ENCODE measurements at regions of chr7 and their contacts with region 1.

Region 1: DNA sequence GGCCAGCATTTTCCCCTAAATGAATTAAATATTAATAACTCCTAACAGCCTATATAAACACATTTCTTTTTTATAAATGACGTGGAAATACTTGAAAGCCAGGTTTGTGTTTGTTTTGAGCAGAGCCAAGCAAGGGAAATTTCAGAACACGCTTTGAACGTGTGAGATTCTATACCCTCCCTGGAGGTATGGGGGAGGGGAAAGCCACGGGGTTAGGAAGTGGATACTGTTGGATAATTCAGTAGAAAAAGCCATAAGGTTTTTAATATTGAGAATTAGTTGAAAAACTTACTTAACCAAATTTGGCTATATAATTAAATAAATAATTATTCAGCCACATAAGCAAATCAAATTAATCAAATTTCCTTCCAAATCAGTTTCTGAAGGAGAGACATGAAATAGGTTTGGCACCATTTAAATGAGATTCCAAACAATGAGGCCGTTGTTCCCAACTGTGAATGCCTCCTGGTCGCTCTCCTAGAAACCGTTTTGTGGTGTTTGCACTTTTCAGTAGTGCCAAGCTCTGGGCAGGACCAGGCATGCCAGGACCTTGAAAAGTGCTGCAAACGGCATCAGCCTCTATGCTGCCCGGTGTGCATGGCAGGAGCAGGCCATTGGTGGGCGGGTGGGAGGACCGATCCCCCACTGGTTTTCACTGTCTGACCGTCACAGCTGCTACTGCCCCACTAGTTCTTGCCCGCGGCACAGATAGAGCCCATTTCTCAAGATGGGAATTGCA is 88.1 kb downstream of the SEPTIN14 start:
- DNase-seq: no peak
- ATAC-seq: no peak
- H3K4me3 ChIP-seq: no peak overlapping the region
- H3K4me3 Mint-ChIP-seq: no peak overlapping the region
- H3K27ac ChIP-seq: no peak overlapping the region
- H3K27ac Mint-ChIP-seq: no peak overlapping the region
- H3K4me1 ChIP-seq: no peaks in the 10 kb centered on the region
- H3K4me1 Mint-ChIP-seq: no peaks in the 10 kb centered on the region
- H3K27me3 ChIP-seq: no peaks in the 10 kb centered on the region
- H3K27me3 Mint-ChIP-seq: no peaks in the 10 kb centered on the region
- CTCF ChIP-seq: no peak

Region 2: DNA sequence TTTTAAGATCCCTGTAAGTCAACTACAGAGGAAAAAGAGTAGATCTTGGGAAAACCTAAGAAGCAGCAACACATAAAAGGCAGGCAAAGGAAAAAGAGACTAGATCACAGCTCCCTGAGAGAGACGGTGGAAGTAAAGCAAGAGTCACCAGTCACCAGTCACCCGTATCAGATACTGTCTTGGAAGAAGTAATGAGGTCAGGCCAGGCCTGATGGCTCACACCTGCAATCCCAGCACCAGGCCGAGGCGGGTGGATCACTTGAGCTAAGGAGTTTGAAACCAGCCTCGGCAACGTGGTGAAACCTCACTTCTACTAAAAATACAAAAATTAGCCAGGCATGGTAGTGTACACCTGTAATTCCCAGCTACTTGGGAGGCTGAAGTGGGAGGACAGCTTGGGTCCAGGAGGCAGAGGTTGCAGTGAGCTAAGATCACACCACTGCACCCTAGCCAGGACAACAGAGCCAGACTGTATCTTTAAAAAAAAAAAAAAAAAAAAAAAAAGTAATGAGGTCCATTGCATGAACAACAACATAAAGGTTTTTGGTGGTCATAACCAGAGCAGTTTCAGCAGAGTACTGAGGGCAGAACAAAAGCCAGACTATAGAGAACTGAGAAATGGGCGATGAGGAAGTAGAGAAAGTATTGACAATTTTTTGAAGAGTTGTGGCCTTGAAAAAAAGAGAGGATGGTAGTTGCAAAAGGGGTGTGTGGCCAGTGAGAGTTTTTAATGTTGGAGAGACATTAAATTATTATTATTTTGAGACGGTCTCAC is 129.7 kb after region 1 on chr7:
- CTCF ChIA-PET with region 1: no interaction called
- POLR2A ChIA-PET with region 1: no interaction called
- intact Hi-C with region 1: loop called (anchors 10 kb)
- DNase-seq: peak; percentile 17
- ATAC-seq: peak; percentile 73
- H3K4me3 ChIP-seq: no peak overlapping the region
- H3K4me3 Mint-ChIP-seq: no peak overlapping the region
- H3K27ac ChIP-seq: peak overlapping the region in 1 of 2 donors; percentile 70
- H3K27ac Mint-ChIP-seq: peak overlapping the region; percentile 78
- H3K4me1 ChIP-seq: peaks cover 11 to 15% of the 10 kb centered on the region in 2 donors
- H3K4me1 Mint-ChIP-seq: peaks cover 10% of the 10 kb centered on the region
- H3K27me3 ChIP-seq: no peaks in the 10 kb centered on the region
- H3K27me3 Mint-ChIP-seq: no peaks in the 10 kb centered on the region
- CTCF ChIP-seq: no peak